ENCODE measurements at regions of chr6 and their contacts with region 1.

Region 1: GRCh38 chr6:2791124-2791974 is 26.2 kb downstream of the WRNIP1 start:
- DNase-seq: peak; percentile 73
- CTCF ChIP-seq: peak; percentile 65

Region 2: DNA sequence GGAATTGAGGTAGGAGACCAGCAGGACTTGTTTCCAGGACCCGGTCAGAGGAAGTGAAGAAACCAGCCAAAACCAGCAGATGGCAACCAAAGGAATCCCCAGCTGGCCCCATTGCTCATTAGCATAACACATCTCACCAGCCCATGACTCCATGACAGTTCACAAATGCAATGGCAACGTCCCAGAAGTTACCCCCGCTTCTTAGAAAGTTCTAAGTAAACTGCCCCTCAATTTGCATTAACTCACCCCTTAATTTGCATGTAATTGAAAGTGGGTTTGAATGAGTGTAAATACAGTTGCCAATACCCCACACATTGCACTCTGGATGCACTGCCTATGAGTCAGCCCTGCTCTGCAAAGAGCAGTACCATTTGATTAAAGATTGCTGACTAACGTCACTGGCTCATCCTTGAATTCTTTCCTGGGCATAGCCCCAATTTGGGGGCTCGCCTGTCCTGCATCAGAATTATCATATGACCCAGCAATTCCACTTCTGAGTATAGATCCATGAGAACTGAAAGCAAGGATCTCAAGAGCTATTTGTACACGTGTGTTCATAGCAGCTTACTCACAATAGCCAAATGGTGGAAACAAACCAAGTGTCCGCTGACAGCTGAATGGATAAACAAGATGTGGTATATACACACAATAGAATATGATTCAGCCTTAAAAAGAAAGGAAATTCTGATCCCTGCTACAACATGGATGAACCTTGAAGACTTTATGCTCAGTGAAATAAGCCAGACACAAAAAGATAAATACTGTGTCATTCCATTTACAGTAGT is 77.0 kb before region 1 on chr6:
- CTCF ChIA-PET with region 1: no interaction called
- POLR2A ChIA-PET with region 1: no interaction called
- DNase-seq: no peak
- CTCF ChIP-seq: no peak

Region 3: GRCh38 chr6:2725999-2726567 is 65.3 kb before region 1 on chr6:
- CTCF ChIA-PET with region 1: no interaction called
- POLR2A ChIA-PET with region 1: no interaction called
- DNase-seq: peak; percentile 60
- CTCF ChIP-seq: no peak

Region 4: DNA sequence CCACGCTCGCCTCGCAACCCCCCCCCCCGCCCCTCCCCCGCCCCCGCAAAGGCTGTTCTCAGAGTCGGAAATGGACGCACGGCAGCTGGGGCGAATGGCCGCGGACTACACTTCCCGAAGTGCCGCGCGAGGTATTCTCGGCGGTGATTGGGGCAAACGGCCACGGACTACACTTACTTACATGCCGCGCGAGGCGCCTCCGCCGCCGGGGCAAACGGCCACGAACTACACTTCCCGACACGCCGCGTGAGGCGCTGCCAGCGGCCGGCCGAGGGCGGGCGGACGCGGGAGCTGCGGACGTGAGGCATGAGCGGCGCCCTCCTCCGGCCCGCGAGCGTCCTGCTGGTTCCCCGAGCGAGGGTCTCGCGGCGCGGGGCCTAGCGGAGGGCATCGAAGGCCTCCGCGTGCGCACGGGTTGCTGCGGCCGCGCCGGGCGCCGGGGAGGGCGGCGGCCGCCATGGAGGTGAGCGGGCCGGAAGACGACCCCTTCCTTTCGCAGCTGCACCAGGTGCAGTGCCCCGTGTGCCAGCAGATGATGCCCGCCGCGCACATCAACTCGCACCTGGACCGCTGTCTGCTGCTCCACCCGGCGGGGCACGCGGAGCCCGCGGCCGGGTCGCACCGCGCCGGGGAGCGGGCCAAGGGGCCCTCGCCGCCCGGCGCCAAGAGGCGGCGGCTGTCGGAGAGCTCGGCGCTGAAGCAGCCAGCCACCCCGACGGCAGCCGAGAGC is 26.0 kb before region 1 on chr6 and contains the start of gene WRNIP1:
- CTCF ChIA-PET with region 1: interaction called, 20 read pairs
- POLR2A ChIA-PET with region 1: no interaction called
- DNase-seq: peak; percentile 96
- CTCF ChIP-seq: peak; percentile 67

Region 5: GRCh38 chr6:2818593-2818992 is 27.2 kb after region 1 on chr6:
- CTCF ChIA-PET with region 1: interaction called, 11 read pairs
- POLR2A ChIA-PET with region 1: no interaction called
- DNase-seq: no peak
- CTCF ChIP-seq: no peak

Region 6: DNA sequence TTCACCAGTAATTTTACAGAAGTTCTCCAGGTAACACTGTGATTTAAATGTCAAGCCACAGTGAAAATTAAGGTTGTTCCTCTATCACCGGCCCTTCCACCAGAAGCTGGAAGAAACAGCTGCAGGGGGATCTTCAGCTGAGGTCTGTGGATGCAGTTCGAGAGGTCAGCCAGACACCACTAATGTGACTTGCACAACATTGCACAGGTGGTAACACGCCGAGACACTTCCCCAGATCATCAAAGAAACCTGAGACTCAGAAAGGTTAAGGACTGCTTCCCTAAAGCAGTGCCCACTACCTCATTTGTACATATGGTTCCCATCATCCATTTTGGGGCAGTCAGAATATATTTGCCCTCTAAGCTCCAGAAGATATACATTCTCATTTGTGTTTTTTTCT is 119.8 kb after region 1 on chr6:
- CTCF ChIA-PET with region 1: interaction called, 32 read pairs
- POLR2A ChIA-PET with region 1: no interaction called
- DNase-seq: no peak
- CTCF ChIP-seq: no peak

Region 7: DNA sequence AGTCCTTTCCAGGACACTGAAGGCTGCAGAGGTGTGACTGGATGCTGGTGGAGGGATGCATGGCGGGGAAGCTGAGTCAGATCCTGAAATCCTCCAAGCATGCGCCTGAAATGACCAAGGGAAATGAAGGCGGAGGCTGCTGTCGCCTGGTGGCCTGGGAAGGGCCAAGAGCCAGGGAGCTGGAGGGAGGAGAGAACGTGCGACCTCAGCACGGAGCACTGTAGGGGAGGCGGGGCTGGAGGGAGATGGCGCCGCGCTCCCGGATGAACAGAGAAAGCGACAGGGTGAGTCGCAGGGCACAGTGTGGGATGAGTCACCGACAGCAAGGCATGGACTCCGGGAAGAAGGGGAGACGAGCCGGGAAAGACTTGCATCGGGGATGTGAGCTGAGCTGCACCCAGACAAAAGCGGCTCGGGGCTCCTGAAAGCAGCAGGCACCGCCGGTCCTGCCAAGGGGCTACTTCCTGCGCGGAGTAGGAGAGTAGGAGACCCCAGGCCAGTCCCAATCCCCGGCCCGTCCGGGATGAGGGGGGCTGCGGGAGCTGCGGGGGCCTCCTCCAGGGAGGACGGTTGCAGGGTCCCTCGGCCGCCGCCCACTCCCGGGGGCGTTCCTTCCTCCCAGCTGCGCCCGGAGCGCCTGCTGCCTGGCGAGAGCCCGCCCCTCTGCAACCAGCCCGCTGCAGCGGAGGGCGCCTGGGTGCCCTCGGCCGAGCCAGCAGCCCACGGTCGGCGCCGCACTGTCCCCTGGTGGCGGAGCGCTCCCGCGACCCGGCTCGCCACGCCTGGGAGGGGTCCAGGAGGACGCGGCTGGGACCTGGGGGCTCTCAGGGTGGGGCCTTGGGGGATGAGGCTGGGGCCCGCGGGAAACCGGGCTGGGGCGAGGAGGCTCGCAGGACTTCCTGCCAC is 197.3 kb after region 1 on chr6:
- CTCF ChIA-PET with region 1: interaction called, 32 read pairs
- POLR2A ChIA-PET with region 1: no interaction called
- DNase-seq: peak; percentile 75
- CTCF ChIP-seq: peak; percentile 74

Measured in GM10248 (cell line).